Motor neuron (in vitro differentiated cells): ENCODE measurements at regions of chr5 and their contacts with region 1.

Region 1: GRCh38 chr5:83430130-83431010 is 41.2 kb upstream of the VCAN start:
- ATAC-seq: peak in 6 of 8 experiments; percentile 44 to 89 (median 66)
- H3K4me3 ChIP-seq: no peak overlapping the region
- H3K27ac ChIP-seq: no peak overlapping the region
- H3K4me1 ChIP-seq: no peaks in the 10 kb centered on the region

Region 2: DNA sequence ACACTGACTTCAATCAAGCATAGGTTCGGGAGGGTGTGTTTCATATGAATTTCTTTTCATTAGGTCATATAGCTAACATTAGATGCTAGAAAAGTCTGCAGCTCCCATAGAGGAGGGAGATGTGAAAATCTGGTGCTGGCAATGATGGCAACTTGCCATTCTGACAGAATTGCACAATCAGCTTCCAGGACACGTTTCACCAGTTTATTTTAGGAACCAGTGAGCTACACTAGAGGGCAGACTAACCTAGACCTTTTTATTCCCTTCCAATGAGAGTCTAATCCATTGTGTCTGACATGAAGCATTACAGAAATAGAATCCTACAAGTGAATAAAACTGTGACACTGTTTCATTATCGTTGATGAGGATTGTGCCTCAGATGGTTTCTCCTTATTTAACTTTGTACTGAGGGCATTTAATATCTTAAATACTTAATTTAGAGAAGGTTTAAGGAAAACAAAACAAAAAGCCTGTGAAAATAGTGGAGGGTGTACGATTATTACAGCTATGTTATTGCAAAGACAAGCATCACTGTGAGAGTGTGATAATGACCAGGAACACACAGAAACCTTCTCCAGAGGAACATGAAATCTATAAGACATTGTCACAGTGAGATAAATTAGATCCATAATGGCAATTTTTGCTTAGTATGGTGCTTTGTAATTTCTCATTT is 788.9 kb before region 1 on chr5:
- in situ Hi-C with region 1: loop called in 2 of 9 experiments (anchors 25 kb)
- ATAC-seq: peak; percentile 82 to 97 (median 94)
- H3K4me3 ChIP-seq: no peak overlapping the region
- H3K27ac ChIP-seq: no peak overlapping the region
- H3K4me1 ChIP-seq: peaks cover 3 to 12% of the 10 kb centered on the region in 2 donors

Region 3: GRCh38 chr5:82917584-82917983 is 512.8 kb before region 1 on chr5:
- in situ Hi-C with region 1: loop called in 1 of 9 experiments (anchors 25 kb)
- ATAC-seq: no peak
- H3K4me3 ChIP-seq: no peak overlapping the region
- H3K27ac ChIP-seq: no peak overlapping the region
- H3K4me1 ChIP-seq: no peaks in the 10 kb centered on the region